AG04449 (cell line): ENCODE measurements at regions of chr6 and their contacts with region 1.

Region 1: DNA sequence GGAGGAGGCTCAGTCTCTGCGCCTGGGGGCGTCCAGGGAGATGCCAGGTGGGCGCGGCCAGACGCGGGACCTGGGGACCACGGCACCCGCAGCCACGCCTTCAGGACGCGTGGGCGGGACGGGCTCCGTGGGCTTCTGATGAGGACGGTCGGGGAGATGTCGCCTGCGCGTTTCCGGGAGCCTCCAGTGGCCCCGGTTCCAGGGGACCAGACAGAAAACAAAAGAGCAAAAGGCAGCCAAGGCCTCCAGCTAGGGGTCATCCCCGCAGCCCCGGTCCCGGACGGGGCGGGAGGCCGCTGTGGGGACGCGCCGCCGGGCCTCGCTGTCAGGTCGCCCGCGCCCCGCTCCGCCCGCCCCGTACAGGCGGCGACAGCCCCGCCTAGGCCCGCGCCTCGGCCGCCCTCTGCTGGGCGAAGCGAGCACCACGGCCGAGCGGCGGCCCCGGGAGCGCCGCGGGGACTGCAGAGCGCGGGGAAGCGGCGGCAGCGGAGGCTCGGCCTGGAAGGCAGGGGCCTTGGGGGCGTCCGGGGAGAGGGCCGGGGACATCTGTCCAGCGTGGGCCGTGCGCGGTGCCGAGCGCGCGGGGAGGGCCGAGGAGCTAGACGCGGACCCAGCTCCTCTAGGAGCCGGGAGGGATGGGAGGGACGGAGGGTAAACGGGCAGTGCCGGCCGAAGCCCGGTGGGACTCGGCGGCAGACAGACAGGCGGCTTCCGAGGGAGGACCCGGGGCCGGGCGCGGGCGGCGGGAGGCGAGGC is 48.7 kb downstream of the TMEM242 start:
- DNase-seq: no peak
- H3K4me3 ChIP-seq: peak overlapping the region; percentile 68
- CTCF ChIP-seq: peak; percentile 58

Region 2: DNA sequence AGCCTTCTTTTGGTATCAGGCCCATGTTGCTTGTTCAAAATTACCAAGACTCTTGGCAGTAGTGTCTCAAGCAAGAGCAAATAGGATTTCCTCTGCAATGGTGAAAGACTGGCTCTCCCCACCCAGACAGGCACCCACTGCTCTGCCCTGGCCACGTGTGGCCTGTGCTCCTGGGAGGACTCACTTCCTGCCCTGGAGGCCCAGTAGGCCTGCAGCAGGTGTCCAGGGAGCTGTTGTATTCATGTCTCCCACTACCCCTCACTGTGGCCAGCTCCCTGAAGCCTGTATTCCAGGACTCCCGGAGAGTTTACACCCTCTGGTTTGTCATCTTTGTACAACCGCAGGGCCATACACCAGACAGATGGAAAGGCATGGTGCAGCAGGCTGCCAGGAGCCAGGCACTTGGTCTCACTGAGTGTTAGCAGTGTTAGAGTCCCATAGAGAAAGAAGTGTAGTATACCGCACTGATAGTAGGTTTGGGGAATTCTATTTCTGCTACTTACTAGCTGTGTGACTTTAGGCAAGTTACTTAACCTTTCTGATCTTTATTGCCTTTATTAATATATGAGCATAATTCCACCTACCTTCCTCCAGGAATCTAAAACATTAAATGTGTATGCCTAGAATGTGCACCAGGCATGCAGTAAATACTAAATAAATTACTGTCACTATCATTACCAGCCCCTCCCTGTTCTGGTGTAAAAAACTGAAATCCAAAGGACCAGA is 111.1 kb before region 1 on chr6:
- CTCF ChIA-PET with region 1: no interaction called
- POLR2A ChIA-PET with region 1: no interaction called
- DNase-seq: no peak
- H3K4me3 ChIP-seq: no peak overlapping the region
- CTCF ChIP-seq: no peak

Region 3: DNA sequence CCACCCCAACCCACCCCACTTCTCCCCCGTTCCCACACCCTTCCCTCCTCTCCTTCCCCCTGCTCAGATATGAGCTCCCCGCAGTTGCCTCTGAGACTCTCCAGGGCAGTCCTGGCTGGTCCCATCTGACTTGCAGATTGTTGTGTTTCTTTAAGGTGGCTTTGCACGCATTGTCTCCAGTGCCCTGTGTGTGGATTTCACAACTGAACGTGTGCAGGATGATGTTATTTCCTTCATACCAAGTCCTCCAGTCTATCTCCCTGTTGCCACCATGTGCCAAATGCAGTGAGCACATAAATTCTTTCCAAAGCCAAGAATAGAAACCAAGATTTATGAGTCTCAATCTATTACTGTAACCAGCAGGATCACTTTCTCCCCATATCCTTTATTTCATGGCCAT is 30.5 kb before region 1 on chr6:
- CTCF ChIA-PET with region 1: interaction called, 20 read pairs
- POLR2A ChIA-PET with region 1: no interaction called
- DNase-seq: peak; percentile 85
- H3K4me3 ChIP-seq: no peak overlapping the region
- CTCF ChIP-seq: no peak

Region 4: GRCh38 chr6:157249826-157250225 is 24.8 kb before region 1 on chr6:
- CTCF ChIA-PET with region 1: interaction called, 20 read pairs
- POLR2A ChIA-PET with region 1: no interaction called
- DNase-seq: no peak
- H3K4me3 ChIP-seq: no peak overlapping the region
- CTCF ChIP-seq: no peak

Region 5: DNA sequence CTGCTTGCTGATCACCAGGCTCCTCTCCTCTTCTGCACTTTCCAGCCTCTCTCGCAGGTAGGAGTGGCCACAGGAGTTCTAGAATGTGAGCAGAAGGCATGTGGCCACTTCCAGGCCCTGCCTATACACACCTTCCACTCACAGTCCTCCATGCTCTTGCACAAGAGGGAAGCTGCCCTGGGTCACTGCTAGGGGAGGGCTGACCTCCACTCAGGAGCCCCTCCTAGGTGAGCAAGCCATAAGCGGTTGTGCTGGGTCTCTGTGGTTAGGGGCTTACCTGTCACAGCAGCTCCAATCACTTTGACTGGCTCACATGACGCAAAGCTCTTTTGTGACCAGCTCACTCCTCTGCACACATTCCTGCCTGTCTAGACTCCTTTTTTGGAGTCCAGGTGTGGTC is 19.6 kb before region 1 on chr6:
- CTCF ChIA-PET with region 1: interaction called, 12 read pairs
- POLR2A ChIA-PET with region 1: no interaction called
- DNase-seq: no peak
- H3K4me3 ChIP-seq: no peak overlapping the region
- CTCF ChIP-seq: no peak

Region 6: DNA sequence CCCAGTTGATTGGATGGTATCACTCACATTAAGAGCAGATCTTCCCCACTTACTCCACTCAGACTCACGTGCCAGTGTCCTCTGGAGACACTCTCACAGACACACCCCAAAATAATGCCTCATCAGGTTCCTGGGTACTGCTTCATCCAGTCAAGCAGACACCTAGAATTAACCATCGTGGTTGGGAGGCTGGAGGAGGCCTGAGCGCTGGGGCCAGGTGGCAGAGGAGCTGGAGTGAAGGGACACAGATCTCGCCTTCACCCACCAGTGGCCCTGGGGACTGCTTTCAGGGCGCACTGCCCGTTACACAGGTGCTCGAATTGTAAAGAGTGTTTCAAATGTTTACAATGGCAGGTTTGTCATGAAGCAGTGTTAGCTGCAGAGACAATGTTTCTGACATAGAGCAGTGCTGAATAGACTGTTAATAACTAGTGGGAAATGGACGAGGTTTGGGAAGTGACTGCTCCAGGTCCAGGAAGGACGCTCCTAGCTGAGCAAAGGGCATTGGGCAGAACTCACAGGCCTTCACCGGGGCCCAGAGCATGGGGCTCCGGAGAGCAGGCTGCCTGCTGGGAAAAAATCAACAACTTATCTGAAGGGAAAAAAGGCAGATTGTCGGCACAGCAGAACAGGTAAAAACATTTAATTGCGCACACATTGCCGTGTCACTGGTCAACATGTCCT is 10.2 kb after region 1 on chr6:
- CTCF ChIA-PET with region 1: interaction called, 72 read pairs
- POLR2A ChIA-PET with region 1: no interaction called
- DNase-seq: no peak
- H3K4me3 ChIP-seq: no peak overlapping the region
- CTCF ChIP-seq: no peak

Region 7: DNA sequence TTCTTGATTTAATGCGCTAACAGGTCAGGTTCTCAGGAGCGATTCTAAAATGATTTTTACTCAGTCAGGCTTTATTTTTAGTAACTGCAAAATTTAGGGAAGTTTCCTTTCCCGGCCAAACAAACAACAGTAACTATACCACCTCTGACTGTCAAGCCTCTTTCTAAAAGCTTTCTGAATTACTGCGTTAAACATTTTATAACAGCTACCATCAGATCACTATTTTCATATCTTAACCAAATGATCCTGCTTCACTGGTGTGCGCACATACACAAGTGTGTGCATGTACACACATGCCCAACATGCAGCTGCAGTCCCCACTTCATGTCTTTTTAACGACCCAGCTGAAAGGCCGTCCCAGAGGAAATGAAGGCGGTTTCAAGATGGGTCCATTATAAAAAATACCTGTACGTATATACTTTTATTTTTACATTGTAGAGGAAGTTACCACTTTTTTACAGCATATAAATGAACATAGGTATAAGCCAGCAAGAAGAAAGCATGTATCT is 23.6 kb after region 1 on chr6:
- CTCF ChIA-PET with region 1: interaction called, 19 read pairs
- POLR2A ChIA-PET with region 1: no interaction called
- DNase-seq: no peak
- H3K4me3 ChIP-seq: no peak overlapping the region
- CTCF ChIP-seq: no peak